Activated CD4-positive, alpha-beta T cell treated with anti-CD3 and anti-CD28 coated beads for 36 hours (primary cell): ENCODE measurements at regions of chr11 and their contacts with region 1.

Region 1: DNA sequence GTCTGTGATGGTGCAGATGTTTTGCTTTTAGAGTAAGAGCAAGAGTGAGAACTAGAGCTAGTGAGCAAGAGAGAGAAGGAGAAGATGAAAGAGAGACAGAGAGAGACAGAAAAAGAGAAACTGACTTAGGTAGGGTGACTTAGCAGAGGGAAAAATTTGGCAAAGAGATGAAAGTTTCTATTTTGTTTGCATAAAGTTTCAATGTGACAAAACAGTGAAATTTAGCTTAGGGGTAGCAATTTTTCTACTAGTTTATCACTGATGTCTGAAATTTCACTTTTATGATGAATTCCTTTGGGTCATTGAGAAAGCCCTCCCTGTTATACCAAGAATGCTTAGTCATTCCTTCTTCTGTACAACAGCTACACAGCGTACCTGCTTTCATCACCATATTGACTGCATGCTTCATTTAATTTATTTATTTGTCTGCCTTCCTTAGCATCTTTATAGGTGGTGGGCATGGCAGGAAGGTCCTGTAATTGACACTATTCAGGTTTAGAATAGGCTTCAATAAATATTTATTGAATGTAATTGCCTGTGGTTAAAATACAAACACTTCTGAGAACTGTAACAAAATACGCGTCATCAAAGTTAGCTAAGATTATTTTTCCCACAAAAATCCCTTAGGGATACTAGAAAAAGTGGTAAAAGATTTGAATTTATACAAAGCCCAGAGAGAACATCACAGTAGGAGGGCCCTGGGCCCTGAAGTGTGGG is 19.9 kb upstream of the CTSC start:
- DNase-seq: no peak
- ATAC-seq: peak; percentile 86
- H3K4me3 Mint-ChIP-seq: no peak overlapping the region
- H3K27ac Mint-ChIP-seq: peak overlapping the region; percentile 69
- H3K4me1 Mint-ChIP-seq: peaks cover 52% of the 10 kb centered on the region
- H3K27me3 Mint-ChIP-seq: no peaks in the 10 kb centered on the region

Region 2: DNA sequence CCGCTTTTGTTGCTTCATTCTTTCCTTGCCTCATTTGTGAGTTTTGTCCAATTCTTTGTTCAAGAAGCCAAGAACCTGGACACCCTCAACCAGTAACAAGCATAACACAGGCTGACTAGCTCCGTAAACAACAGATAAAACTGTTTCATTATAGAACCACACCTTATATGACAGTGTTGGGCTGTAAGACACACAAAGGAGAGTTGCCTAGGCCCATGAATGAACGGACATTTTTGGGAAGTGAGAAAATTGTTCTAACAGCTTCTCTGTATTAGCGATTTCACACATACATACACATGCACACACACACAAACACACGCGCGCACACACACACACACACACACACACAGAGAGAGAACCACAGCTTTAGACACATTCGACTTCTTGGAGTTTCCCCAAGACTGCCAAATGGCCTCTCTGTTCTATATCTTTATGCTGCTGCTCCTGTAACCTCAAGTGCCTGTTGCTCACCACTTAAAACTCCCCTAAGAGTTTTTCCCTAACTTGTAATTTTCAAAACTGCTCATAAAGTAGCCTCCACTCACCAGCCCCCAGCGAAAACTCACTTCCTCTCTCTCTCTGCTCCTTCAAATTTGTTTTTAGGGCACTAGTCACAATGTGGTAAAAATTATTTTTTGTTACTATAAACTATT is 55.9 kb before region 1 on chr11:
- CTCF ChIA-PET with region 1: no interaction called
- POLR2A ChIA-PET with region 1: no interaction called
- intact Hi-C with region 1: loop called in 1 of 2 experiments (anchors 1 kb)
- DNase-seq: peak; percentile 16
- ATAC-seq: peak; percentile 54
- H3K4me3 Mint-ChIP-seq: no peak overlapping the region
- H3K27ac Mint-ChIP-seq: peak overlapping the region; percentile 89
- H3K4me1 Mint-ChIP-seq: peaks cover 33% of the 10 kb centered on the region
- H3K27me3 Mint-ChIP-seq: no peaks in the 10 kb centered on the region

Region 3: GRCh38 chr11:88337181-88337986 is 20.1 kb before region 1 on chr11 and contains the start of gene CTSC:
- CTCF ChIA-PET with region 1: interaction called, 11 read pairs
- POLR2A ChIA-PET with region 1: interaction called, 13 read pairs
- intact Hi-C with region 1: loop called (anchors 1 kb)
- DNase-seq: peak; percentile 97
- ATAC-seq: peak; percentile 78
- H3K4me3 Mint-ChIP-seq: peak within 1 kb of the TSS; percentile 99
- H3K27ac Mint-ChIP-seq: peak within 1 kb of the TSS; percentile 89
- H3K4me1 Mint-ChIP-seq: peaks cover 47% of the 10 kb centered on the region
- H3K27me3 Mint-ChIP-seq: no peaks in the 10 kb centered on the region
- total RNA-seq, gene CTSC: 53.1 to 59.4 TPM

Region 4: DNA sequence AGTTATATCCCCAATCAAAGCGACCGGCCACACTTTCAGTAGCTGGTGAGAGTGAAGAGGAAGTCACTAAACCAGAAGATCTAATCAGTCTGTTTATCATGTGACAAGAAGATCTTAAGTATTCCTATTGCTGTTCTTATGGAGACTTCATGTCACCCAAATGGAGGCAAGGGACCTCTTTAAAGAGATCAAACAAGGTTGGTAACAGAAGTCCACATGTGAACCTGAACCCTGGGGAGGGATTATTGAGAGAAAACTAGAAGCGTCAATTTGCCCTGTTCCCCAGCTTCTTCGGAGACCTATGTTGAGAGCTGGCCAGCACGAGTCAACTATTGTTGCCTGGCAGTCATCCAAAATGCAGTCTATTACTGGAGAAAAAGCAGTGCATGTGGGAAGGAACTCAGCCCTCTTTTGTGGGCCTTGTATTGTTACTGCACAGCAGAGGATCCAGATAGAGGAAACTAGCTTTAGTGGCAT is 56.9 kb after region 1 on chr11:
- CTCF ChIA-PET with region 1: interaction called, 3 read pairs
- POLR2A ChIA-PET with region 1: no interaction called
- intact Hi-C with region 1: loop called (anchors 2 to 5 kb)
- DNase-seq: peak; percentile 39
- ATAC-seq: peak; percentile 26
- H3K4me3 Mint-ChIP-seq: peak overlapping the region; percentile 28
- H3K27ac Mint-ChIP-seq: peak overlapping the region; percentile 79
- H3K4me1 Mint-ChIP-seq: peaks cover 39% of the 10 kb centered on the region
- H3K27me3 Mint-ChIP-seq: no peaks in the 10 kb centered on the region

Region 5: DNA sequence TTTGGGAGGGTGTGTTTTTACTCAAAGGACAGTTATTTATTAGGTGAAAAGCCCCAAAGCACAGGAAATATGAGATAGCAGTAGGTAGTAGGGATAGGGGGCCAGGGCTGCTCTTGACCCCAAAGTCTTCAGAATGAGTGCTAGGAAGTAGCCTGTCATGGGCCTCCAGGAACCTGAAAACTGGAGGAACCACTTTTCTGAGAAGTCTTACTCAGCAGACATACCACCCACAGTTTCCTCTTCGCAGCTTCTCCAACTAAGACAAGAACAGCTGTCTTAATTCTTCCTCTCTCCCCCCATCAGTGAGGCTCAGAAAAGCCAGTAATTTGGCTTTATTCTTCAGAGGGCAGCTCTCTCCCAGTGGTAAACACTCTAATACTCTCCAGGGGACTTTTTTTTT is 64.0 kb after region 1 on chr11:
- CTCF ChIA-PET with region 1: no interaction called
- POLR2A ChIA-PET with region 1: no interaction called
- intact Hi-C with region 1: loop called (anchors 1 to 2 kb)
- DNase-seq: peak; percentile 69
- ATAC-seq: peak; percentile 93
- H3K4me3 Mint-ChIP-seq: no peak overlapping the region
- H3K27ac Mint-ChIP-seq: peak overlapping the region; percentile 91
- H3K4me1 Mint-ChIP-seq: peaks cover 62% of the 10 kb centered on the region
- H3K27me3 Mint-ChIP-seq: no peaks in the 10 kb centered on the region